ENCODE measurements at regions of chr19 and their contacts with region 1.

Region 1: DNA sequence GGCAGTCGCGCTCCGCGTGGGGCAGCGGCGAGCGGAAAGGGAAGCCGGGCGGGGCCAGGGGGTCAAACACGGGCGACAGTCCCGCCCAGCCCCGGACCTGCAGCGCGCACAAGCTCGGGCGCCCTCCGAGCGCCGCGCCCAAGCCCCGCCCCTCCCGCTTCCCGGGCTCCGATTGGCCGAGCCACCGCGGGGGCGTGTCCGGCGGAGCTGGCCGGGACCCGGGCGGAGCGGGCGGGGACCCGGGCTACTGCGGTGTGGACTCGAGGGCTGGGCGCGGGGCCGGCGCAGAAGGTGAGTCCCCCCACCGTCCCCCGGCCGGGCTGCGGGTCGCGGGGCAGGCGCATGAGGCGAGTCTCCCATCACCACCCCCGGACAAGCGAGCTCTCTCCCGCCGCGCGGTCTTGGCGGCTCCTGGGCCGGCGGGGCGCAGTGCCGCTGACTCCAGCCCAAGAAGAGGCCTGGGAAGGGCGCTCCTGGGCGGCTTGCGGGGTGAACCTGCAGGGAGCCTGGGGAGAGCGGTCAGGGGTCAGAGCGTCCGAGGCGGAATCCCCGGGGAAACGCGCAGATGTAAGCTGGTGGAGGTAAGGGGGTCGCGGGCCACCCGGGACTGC is at the start of gene PLEKHF1:
- DNase-seq: peak; percentile 92
- H3K4me3 Mint-ChIP-seq: peak within 1 kb of the TSS; percentile 95
- H3K27ac Mint-ChIP-seq: peak within 1 kb of the TSS; percentile 85
- H3K4me1 Mint-ChIP-seq: peaks cover 68% of the 10 kb centered on the region
- H3K27me3 Mint-ChIP-seq: no peaks in the 10 kb centered on the region
- total RNA-seq, gene PLEKHF1: 30.9 and 35.0 TPM in 2 replicates

Region 2: DNA sequence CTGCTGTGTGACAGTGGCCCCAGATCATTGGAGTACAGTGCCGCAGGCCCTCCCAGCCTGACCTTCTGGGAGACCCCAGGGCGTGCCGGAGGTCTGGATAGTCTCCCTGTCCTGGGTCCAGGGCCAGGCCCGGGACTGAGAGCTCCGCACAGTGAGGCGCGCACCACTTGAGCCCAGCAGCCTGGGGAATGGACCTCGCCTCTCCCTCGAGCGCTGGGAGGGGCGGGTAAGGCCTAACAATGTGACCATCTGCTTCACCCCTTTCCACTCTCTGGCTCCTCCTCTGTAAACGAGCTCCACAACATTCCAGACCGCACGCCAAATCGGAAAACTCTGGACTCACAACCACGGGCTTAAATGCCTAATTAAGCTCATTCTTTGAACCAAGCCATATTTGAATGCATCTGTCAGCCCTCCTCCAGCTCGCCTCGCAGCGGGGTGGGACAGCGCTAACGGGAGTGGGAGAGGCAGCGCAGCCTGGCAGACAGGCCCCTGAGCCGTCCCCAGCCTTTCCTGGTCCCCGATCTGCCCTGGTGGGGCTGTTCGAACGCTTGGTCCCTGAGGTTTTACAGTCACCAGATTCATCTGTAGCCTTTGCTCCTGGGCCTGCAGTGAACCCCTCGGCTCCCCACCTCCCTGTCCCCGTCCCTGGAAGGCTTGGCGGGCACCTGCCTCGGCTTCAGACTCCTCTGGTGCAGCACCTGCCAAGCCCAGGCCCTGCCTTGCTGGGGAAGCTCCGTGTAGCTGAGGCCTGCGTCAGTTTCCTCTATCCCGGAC is 260.2 kb before region 1 on chr19:
- intact Hi-C with region 1: no loop called
- DNase-seq: no peak
- H3K4me3 Mint-ChIP-seq: no peak overlapping the region
- H3K27ac Mint-ChIP-seq: no peak overlapping the region
- H3K4me1 Mint-ChIP-seq: no peaks in the 10 kb centered on the region
- H3K27me3 Mint-ChIP-seq: no peaks in the 10 kb centered on the region

Region 3: DNA sequence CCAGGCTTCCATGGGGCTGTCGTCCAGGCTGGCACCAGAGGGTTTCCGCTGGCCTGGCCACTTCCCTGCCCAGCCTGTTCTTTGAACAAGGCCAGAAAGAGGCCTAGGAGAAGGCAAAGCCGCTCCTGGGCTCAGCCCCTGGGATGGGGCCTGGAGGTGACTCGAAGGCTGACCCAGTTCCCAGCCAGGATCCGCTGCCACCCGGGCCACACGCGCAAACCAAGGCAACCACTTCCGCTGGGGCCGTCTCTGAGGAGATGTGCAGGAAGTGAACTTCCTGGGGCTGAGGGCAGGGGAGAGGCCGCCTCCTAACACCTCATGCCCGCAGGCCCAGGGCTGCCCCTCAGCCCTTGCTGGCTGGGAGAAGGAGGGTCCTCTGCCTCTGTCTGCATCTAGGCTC is 15.1 kb after region 1 on chr19:
- intact Hi-C with region 1: loop called (anchors 2 kb)
- DNase-seq: peak; percentile 81
- H3K4me3 Mint-ChIP-seq: peak overlapping the region; percentile 37
- H3K27ac Mint-ChIP-seq: peak overlapping the region; percentile 86
- H3K4me1 Mint-ChIP-seq: peaks cover 44% of the 10 kb centered on the region
- H3K27me3 Mint-ChIP-seq: no peaks in the 10 kb centered on the region

Region 4: DNA sequence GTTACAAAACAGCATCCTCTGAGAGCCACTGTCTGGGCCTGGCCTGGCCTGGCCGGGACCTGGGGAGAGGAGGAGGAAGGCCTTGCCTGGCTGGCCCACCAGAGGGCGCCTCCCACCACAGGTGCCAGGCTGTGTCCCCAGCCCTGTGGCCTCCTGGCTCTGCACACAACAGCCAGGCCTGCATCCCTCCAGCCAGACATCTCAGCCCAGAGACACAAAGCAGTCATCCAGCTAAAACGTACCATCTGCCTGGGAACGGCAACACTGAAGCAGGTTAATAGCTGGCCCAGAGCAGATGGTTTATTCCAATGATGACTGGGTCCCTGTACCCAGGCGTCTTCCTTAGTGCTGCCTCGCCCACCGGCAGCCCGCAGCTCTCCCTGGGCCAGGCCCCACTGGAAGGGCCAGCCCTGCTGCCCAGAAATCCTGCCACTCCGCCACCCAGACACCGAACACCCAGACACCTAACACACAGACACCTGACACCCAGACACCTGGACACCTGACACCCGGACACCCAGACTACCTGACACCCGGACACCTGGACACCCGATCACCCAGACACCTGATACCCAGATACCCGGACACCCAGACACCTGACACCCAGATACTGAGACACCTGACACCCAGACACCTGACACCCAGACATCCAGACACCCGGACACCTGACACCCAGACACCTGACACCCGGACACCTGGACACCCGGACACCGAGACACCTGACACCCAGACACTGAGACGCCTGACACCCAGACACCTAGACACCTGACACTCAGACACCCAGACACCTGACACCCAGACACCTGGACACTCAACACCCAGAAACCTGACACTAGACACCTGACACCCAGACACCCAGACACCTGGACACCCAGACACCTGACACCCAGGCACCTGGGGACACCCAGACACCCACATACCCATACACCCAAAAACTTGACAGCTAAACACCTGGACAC is 29.6 kb after region 1 on chr19:
- intact Hi-C with region 1: loop called (anchors 1 kb)
- DNase-seq: peak; percentile 73
- H3K4me3 Mint-ChIP-seq: no peak overlapping the region
- H3K27ac Mint-ChIP-seq: peak overlapping the region; percentile 70
- H3K4me1 Mint-ChIP-seq: peaks cover 15% of the 10 kb centered on the region
- H3K27me3 Mint-ChIP-seq: no peaks in the 10 kb centered on the region

Region 5: GRCh38 chr19:29724102-29724641 is 58.9 kb after region 1 on chr19:
- intact Hi-C with region 1: no loop called
- DNase-seq: no peak
- H3K4me3 Mint-ChIP-seq: no peak overlapping the region
- H3K27ac Mint-ChIP-seq: no peak overlapping the region
- H3K4me1 Mint-ChIP-seq: peaks cover 4% of the 10 kb centered on the region
- H3K27me3 Mint-ChIP-seq: peaks cover 37% of the 10 kb centered on the region

Region 6: GRCh38 chr19:29785955-29786589 is 120.8 kb after region 1 on chr19:
- intact Hi-C with region 1: no loop called
- DNase-seq: no peak
- H3K4me3 Mint-ChIP-seq: no peak overlapping the region
- H3K27ac Mint-ChIP-seq: no peak overlapping the region
- H3K4me1 Mint-ChIP-seq: peaks cover 4% of the 10 kb centered on the region
- H3K27me3 Mint-ChIP-seq: peaks cover 2% of the 10 kb centered on the region

Region 7: GRCh38 chr19:29837448-29837981 is 172.2 kb after region 1 on chr19:
- intact Hi-C with region 1: loop called (anchors 2 kb)
- DNase-seq: peak; percentile 64
- H3K4me3 Mint-ChIP-seq: peak overlapping the region; percentile 77
- H3K27ac Mint-ChIP-seq: peak overlapping the region; percentile 99
- H3K4me1 Mint-ChIP-seq: peaks cover 68% of the 10 kb centered on the region
- H3K27me3 Mint-ChIP-seq: no peaks in the 10 kb centered on the region

Region 8: DNA sequence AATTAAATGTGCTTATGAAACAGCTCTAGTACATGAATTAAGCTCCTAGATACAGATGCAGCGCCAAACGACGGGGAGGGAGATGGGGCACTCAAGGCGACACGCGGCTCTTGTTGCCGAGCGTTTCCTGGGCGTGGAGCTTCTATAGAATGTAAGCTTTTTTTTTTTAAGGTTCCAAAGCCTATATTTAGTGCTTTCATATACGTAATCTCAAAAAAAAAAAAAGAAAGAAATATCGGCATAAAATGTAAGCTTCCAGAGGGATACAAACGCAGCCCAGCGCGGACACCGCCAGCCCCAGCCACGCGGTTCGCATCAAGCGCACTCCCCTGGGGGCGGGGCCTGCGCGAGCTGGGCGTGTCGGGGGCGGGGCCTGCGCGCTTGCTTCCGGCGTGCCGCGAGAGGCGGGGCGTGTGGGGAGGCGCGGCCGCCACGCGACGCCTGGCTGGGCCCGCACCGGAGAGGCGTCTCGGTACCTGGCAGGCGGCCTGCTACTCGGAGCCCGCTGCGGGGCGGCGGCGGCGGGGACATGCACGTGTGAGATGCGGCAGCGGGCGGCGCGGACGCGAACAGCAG is 276.6 kb after region 1 on chr19 and contains the start of gene URI1:
- intact Hi-C with region 1: loop called (anchors 5 kb)
- DNase-seq: peak; percentile 93
- H3K4me3 Mint-ChIP-seq: peak within 1 kb of the TSS; percentile 97
- H3K27ac Mint-ChIP-seq: peak within 1 kb of the TSS; percentile 96
- H3K4me1 Mint-ChIP-seq: peaks cover 48% of the 10 kb centered on the region
- H3K27me3 Mint-ChIP-seq: peaks cover 2% of the 10 kb centered on the region
- total RNA-seq, gene URI1: 62.9 and 67.6 TPM in 2 replicates

Measured in activated T-helper 1 cell treated with anti-CD3 and anti-CD28 coated beads, Interleukin-12 subunit alpha, Interleukin-12 subunit beta, Interleukin-2, Interleukin-4 antibody, amounts not matched to agents 30 ng/mL and 10 ng/mL and 1 ng/mL, durations not matched to agents 14 hours and 24 hours and 36 hours (primary cell).